HEK293 (cell line): ENCODE measurements at regions of chr14 and their contacts with region 1.

Region 1: DNA sequence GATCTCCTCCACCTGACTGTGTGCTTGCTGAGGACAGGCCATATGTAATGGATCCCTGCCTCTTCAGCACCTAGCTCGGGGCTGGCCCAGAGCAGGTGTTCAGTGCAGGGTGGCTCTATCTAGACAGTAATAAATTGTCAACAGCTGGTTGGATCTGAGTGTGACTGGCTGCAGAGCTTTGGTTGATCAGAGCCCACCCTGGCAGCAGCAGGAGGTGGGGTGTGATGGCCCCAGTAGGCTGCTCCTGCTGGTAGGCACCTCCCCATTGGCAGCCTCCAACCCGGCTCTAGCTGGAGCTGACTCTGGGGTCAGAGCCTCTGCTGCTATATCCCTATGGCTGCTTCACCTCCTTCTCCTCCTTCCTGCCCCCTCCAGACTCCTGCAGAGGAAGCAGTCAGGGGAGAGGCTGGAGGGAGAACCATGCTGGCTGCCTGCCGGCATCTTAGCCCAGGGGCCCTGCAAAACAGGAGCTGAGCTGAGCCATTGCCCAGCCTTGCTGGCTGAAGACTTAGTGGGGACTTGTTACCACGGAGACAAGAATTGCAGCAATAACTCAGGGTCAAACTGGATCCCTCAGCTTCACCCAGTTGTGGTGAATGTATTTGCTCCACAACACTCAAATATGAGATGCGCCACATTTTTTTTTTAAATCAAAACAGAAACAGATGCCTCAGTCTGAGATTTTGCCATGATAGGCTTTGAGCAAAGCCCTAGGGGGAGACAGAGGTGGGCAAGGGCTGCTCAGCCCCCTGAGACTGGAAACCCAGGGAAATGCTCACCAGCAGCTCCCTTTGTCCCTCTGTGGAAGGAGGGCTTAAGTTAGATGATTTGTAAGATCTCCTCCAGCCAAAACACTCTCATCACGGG is 22.2 kb downstream of the TMEM63C start:
- H3K4me3 ChIP-seq: no peak overlapping the region
- H3K27ac ChIP-seq: no peak overlapping the region
- H3K4me1 ChIP-seq: no peaks in the 10 kb centered on the region
- CTCF ChIP-seq: no peak

Region 2: DNA sequence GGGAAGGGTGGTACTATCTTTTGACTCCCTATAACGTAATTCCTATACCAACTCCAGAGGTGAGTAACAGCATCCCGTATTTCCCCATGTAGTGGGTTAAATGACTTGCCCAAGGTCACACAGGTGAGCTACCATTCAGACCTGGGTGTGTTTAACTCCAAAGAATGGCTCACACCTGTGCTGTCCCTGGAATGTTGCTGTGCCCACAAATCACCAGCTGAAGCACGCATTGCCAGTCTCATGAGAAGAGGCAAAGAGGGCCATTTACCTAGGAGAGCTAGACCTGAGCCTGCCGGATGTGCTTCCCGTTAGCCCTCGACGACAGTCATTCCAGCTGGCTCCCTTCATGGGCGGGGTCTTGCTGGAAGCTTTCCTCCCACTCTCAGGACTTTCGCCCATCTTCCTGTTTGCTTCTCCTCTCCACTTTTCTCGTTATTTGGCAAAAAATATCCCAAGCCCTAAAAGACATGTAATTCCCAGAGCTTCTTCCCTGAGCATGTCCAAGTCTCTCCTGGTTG is 549.2 kb before region 1 on chr14:
- CTCF ChIA-PET with region 1: no interaction called
- POLR2A ChIA-PET with region 1: no interaction called
- H3K4me3 ChIP-seq: no peak overlapping the region
- H3K27ac ChIP-seq: no peak overlapping the region
- H3K4me1 ChIP-seq: no peaks in the 10 kb centered on the region
- CTCF ChIP-seq: no peak

Region 3: DNA sequence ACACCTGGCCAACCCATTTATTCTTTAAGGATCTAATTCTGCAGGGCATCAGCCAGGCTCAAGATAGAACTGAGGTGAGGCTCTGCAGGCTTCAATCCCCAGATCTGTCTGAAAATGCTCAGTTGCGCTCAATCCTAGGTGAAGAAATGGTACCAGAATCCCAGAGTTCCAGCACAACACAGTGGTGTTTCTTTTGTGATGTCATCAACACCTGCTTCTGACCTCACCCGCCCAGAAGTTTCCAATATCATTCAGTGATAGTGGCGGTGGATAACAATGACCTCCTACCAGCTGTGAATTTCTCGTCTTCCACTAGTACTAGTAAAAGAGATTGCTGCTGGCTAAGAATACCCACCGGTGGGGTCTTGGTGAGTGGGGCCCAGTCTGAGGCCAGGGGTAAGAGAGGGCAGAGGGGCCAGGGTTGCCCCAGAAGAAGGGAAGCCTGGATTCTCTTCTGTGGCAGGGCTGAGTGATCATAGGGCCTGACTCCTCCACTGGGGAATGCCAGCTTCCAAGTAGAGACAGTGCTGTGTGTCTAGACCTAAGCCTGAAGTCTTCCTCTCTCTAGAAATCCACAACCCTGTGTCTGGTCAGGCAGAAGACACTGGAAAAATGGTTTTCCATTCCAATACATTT is 28.1 kb before region 1 on chr14:
- CTCF ChIA-PET with region 1: no interaction called
- POLR2A ChIA-PET with region 1: no interaction called
- H3K4me3 ChIP-seq: no peak overlapping the region
- H3K27ac ChIP-seq: no peak overlapping the region
- H3K4me1 ChIP-seq: no peaks in the 10 kb centered on the region
- CTCF ChIP-seq: no peak

Region 4: GRCh38 chr14:77186911-77187648 is 16.8 kb before region 1 on chr14:
- CTCF ChIA-PET with region 1: interaction called, 10 read pairs
- POLR2A ChIA-PET with region 1: no interaction called
- H3K4me3 ChIP-seq: no peak overlapping the region
- H3K27ac ChIP-seq: no peak overlapping the region
- H3K4me1 ChIP-seq: peaks cover 7% of the 10 kb centered on the region; the same call in 1 of the 2 replicates
- CTCF ChIP-seq: no peak

Region 5: DNA sequence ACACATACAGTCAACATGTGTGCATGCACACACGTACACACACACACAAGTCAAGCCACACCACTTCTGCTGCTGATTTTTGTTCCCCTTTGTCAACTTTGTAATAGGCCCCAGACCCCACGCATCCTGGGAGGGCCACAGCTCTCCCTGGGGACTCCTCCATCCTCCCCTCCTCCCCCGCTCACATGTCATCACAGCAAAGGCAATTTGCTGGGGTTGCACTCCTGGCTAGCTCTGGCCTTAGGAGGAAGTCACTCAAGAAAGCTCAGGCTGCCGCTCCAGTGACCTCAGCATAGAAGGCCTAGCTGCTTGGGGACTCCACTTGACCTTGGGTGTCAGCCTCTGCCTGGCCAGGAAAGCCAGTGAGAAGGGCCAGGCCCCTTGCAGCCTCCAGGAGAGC is 40.0 kb after region 1 on chr14:
- CTCF ChIA-PET with region 1: no interaction called
- POLR2A ChIA-PET with region 1: no interaction called
- H3K4me3 ChIP-seq: no peak overlapping the region
- H3K27ac ChIP-seq: no peak overlapping the region
- H3K4me1 ChIP-seq: no peaks in the 10 kb centered on the region
- CTCF ChIP-seq: no peak